PC-3 (cell line): ENCODE measurements at regions of chr16 and their contacts with region 1.

Region 1: DNA sequence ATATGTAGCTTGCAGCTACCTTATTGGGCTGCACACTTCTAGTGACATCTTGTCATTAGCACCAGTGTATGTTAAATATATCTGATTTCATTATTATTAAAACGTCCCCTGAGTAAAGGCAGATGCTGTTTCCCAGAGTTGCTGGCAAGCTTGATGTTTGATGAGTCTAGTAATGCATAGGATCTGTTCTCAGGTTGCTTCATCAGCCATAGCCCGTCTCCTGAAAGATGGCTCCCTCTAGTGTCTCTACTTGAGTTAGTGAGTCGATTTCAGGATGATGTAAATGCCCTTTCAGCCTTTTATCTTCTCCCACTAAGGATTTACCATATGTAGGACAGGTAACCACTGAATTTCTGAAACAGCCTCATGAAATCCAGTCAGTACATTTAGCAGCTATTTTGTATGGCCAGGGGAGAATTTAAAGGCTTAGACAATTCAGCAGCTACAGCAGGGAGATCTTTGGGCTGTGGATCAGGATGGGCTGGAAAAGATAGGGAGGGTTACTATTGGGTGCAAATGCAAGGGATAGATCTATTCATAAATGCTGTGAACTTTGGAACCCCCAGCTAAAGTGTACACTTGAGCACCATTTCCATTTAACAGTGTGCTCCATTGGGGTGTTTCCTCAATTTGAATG is 376.3 kb downstream of the CNTNAP4 start:
- DNase-seq: peak; percentile 68
- ATAC-seq: peak; percentile 73
- H3K4me3 ChIP-seq: no peak overlapping the region
- H3K27ac ChIP-seq: no peak overlapping the region
- H3K4me1 ChIP-seq: peaks cover 12% of the 10 kb centered on the region
- H3K27me3 ChIP-seq: no peaks in the 10 kb centered on the region
- CTCF ChIP-seq: peak; percentile 75

Region 2: GRCh38 chr16:75789237-75789636 is 864.3 kb before region 1 on chr16:
- CTCF ChIA-PET with region 1: no interaction called
- POLR2A ChIA-PET with region 1: no interaction called
- intact Hi-C with region 1: loop called (anchors 2 kb)
- DNase-seq: peak; percentile 67
- ATAC-seq: peak; percentile 50; the same call in 1 of the 2 replicates
- H3K4me3 ChIP-seq: no peak overlapping the region
- H3K27ac ChIP-seq: no peak overlapping the region
- H3K4me1 ChIP-seq: no peaks in the 10 kb centered on the region
- H3K27me3 ChIP-seq: 0 out of 2 replicates have a peak, but pooled peaks cover 5% of the 10 kb centered on the region
- CTCF ChIP-seq: peak; percentile 84

Region 3: GRCh38 chr16:75801307-75801706 is 852.2 kb before region 1 on chr16:
- CTCF ChIA-PET with region 1: interaction called, 3 read pairs
- POLR2A ChIA-PET with region 1: no interaction called
- intact Hi-C with region 1: loop called (anchors 2 kb)
- DNase-seq: peak; percentile 37
- ATAC-seq: no peak
- H3K4me3 ChIP-seq: no peak overlapping the region
- H3K27ac ChIP-seq: no peak overlapping the region
- H3K4me1 ChIP-seq: no peaks in the 10 kb centered on the region
- H3K27me3 ChIP-seq: peaks cover 18% of the 10 kb centered on the region
- CTCF ChIP-seq: peak; percentile 52

Region 4: DNA sequence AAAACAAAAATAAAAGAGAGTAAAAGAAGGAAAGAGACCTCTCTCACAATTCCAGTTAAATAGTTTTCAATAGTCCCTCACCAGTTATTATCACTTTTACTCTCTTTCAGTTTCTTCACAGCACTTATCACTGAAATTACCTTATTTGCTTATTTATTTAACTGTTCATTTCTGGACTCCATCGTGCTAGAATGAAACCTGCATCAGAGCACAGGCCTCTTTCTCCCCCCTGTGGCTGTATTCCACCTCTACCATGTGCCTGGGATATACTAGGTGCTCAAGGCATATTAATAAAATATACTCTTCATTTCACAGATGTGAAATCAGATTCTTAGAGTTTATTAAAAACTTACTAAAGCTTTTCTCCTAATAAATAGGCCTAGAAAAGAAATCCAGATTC is 228.6 kb after region 1 on chr16:
- CTCF ChIA-PET with region 1: no interaction called
- POLR2A ChIA-PET with region 1: no interaction called
- intact Hi-C with region 1: loop called (anchors 5 kb)
- DNase-seq: peak; percentile 31
- ATAC-seq: peak; percentile 76
- H3K4me3 ChIP-seq: no peak overlapping the region
- H3K27ac ChIP-seq: no peak overlapping the region
- H3K4me1 ChIP-seq: no peaks in the 10 kb centered on the region
- H3K27me3 ChIP-seq: peaks cover 30% of the 10 kb centered on the region
- CTCF ChIP-seq: peak; percentile 60

Region 5: GRCh38 chr16:77043076-77043475 is 389.6 kb after region 1 on chr16:
- CTCF ChIA-PET with region 1: no interaction called
- POLR2A ChIA-PET with region 1: no interaction called
- intact Hi-C with region 1: loop called (anchors 1 kb)
- DNase-seq: peak; percentile 43
- ATAC-seq: peak; percentile 31; the same call in 1 of the 2 replicates
- H3K4me3 ChIP-seq: no peak overlapping the region
- H3K27ac ChIP-seq: no peak overlapping the region
- H3K4me1 ChIP-seq: no peaks in the 10 kb centered on the region
- H3K27me3 ChIP-seq: peaks cover 34% of the 10 kb centered on the region
- CTCF ChIP-seq: peak; percentile 61